ENCODE measurements at regions of chr2 and their contacts with region 1.

Region 1: DNA sequence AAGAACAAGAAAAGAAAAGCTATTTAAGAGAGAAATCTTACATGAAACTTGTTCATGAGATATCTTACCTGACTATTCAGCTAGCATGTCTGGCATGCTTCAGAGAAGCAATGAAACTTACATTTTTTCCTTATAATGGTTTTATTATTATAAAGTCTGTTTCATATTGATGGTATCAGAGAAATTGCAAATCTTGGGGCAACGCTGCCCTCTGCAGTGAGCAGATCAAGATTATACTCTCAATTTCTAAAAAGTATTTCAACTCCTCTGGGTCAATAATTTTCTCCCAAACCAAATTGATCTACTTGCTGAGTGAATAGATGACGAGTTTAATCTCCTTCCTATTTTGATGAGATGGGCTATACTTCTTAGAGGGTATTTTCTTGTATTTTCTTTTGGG is 235.6 kb downstream of the NUP35 start:
- DNase-seq: peak; percentile 8
- ATAC-seq: no peak; the same call in 1 of the 2 replicates
- H3K4me3 ChIP-seq: no peak overlapping the region
- H3K27ac ChIP-seq: no peak overlapping the region
- H3K4me1 ChIP-seq: no peaks in the 10 kb centered on the region
- H3K27me3 ChIP-seq: no peaks in the 10 kb centered on the region
- CTCF ChIP-seq: peak; percentile 20 to 62 (median 45); a peak in 4 of 6 replicates
- POLR2A ChIP-seq: no peak
- RAD21 ChIP-seq: peak; percentile 73

Region 2: DNA sequence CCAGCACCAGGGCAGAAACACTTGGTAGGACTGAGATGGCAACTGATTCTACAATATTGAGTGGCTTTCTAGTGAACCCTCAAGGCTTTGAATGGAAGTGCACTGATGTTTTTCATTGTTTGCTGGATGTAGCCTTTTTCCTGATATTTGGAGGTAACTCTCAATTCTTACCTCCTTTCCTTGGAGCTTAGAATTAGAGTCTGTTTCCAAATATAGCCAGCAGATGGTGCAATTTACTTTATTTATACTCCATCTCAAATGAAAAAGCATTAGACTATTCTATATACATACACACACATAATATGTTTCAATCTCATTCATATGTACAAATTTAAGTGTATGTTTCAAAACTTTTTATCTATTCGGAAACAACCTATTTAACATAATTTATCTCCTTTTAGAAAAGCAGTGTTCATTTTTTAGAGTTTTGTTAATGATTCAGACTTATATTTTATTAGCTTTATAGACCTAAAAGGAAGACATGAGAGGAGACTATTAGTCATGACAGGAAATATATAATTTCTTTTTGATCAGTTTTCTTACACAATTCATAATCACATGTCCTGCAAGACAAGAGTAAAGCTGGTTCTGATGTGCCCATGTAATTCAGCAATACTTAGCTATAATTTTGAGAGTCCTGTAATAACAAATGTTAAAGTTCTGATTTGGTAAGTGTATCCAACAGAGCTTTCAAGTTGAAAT is 110.8 kb before region 1 on chr2:
- CTCF ChIA-PET with region 1: interaction called, 44 read pairs
- POLR2A ChIA-PET with region 1: interaction called, 4 read pairs
- RAD21 ChIA-PET with region 1: interaction called, 3 to 6 read pairs
- intact Hi-C with region 1: loop called (anchors 1 kb)
- DNase-seq: peak; percentile 24
- ATAC-seq: peak; percentile 70
- H3K4me3 ChIP-seq: no peak overlapping the region
- H3K27ac ChIP-seq: no peak overlapping the region
- H3K4me1 ChIP-seq: no peaks in the 10 kb centered on the region
- H3K27me3 ChIP-seq: no peaks in the 10 kb centered on the region
- CTCF ChIP-seq: peak; percentile 36 to 72 (median 58); a peak in 5 of 6 replicates
- POLR2A ChIP-seq: no peak
- RAD21 ChIP-seq: peak; percentile 70

Region 3: GRCh38 chr2:183292028-183292427 is 67.8 kb before region 1 on chr2:
- CTCF ChIA-PET with region 1: interaction called, 14 read pairs
- POLR2A ChIA-PET with region 1: no interaction called
- RAD21 ChIA-PET with region 1: no interaction called
- intact Hi-C with region 1: loop called (anchors 1 kb)
- DNase-seq: no peak
- ATAC-seq: no peak
- H3K4me3 ChIP-seq: no peak overlapping the region
- H3K27ac ChIP-seq: no peak overlapping the region
- H3K4me1 ChIP-seq: no peaks in the 10 kb centered on the region
- H3K27me3 ChIP-seq: no peaks in the 10 kb centered on the region
- CTCF ChIP-seq: no peak
- POLR2A ChIP-seq: no peak
- RAD21 ChIP-seq: no peak